Activated CD4-positive, alpha-beta T cell treated with anti-CD3 and anti-CD28 coated beads for 36 hours (primary cell): ENCODE measurements at regions of chr17 and their contacts with region 1.

Region 1: DNA sequence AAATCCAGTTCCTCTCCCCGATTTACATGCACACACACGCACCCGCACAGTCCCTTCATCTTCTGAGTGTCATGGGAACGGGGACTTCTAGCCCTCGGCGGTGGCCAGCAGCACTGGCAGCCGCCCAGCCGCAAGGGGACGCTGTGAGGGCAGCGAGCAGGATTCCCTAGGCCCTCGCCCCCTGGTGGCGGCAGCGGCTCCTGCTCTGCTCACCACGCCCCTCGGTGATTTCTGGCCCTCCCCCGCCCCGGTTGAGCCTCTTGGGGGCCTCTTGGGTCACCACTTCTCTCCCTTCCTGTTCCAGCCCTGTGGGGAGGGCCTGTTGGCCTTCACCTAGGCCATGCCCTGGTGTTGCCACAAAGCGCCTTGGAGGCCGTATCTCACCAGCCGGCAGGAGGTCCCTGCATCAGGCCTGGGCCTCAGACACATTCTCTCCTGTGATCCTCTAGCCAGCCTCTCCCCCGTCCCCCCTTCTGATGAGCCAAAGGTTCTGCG is 75.2 kb upstream of the KSR1 start:
- DNase-seq: peak; percentile 94
- ATAC-seq: peak; percentile 96
- H3K4me3 Mint-ChIP-seq: no peak overlapping the region
- H3K27ac Mint-ChIP-seq: no peak overlapping the region
- H3K4me1 Mint-ChIP-seq: peaks cover 2% of the 10 kb centered on the region
- H3K27me3 Mint-ChIP-seq: peaks cover 23% of the 10 kb centered on the region

Region 2: GRCh38 chr17:27284811-27285415 is 96.1 kb before region 1 on chr17:
- CTCF ChIA-PET with region 1: no interaction called
- POLR2A ChIA-PET with region 1: no interaction called
- intact Hi-C with region 1: no loop called
- DNase-seq: no peak
- ATAC-seq: no peak
- H3K4me3 Mint-ChIP-seq: no peak overlapping the region
- H3K27ac Mint-ChIP-seq: no peak overlapping the region
- H3K4me1 Mint-ChIP-seq: no peaks in the 10 kb centered on the region
- H3K27me3 Mint-ChIP-seq: peaks cover 2% of the 10 kb centered on the region

Region 3: GRCh38 chr17:27296428-27296979 is 84.5 kb before region 1 on chr17:
- CTCF ChIA-PET with region 1: no interaction called
- POLR2A ChIA-PET with region 1: no interaction called
- intact Hi-C with region 1: no loop called
- DNase-seq: no peak
- ATAC-seq: no peak
- H3K4me3 Mint-ChIP-seq: peak overlapping the region; percentile 89
- H3K27ac Mint-ChIP-seq: peak overlapping the region; percentile 99
- H3K4me1 Mint-ChIP-seq: peaks cover 48% of the 10 kb centered on the region
- H3K27me3 Mint-ChIP-seq: no peaks in the 10 kb centered on the region

Region 4: GRCh38 chr17:27368980-27369379 is 12.1 kb before region 1 on chr17:
- CTCF ChIA-PET with region 1: interaction called, 15 read pairs
- POLR2A ChIA-PET with region 1: no interaction called
- intact Hi-C with region 1: no loop called
- DNase-seq: no peak
- ATAC-seq: no peak
- H3K4me3 Mint-ChIP-seq: no peak overlapping the region
- H3K27ac Mint-ChIP-seq: no peak overlapping the region
- H3K4me1 Mint-ChIP-seq: no peaks in the 10 kb centered on the region
- H3K27me3 Mint-ChIP-seq: peaks cover 3% of the 10 kb centered on the region

Region 5: DNA sequence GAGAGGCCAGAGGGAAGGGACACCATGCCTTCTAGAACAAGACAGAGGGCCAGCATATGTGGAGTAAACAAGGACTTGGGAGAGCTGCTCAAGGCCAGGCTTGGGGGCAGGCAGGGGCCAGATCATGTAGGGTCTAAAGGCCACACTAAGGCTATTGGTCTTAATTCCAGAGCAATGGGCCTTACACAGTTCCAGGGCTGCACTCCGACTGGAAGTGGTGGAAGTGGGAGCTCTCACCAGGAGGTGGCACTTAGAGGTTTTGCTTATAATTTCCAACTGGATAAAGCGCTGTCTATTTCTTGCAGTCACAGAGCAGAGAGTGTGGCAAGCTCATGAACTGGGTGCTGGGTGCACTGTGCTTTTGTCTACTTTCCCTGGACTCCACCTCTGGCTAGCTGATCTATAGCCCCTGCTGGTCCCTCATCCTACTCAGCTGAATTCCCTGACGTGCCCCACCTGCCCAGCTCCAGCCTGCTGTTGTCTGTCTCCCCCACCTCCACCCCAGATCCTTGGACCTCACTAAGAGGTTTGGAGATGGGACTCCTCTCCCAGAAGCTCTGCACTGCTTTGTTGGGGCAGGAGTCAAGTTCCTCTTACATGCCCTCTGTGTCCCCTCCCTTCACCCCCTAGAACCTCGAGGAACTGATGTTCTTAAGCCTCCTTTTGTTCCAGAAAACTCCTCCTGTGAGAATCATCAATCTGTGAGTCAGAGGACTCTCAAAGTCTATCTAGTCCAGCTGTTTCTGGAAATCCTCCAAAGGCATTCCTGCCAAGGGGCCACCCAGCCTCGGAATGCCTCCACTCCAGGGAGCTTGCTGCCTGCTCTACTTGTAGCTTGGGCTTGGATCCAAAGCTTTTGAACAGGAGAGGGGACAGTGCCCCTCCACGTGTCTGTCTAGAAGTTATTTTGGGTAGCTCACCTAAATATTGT is 27.1 kb after region 1 on chr17:
- CTCF ChIA-PET with region 1: interaction called, 14 read pairs
- POLR2A ChIA-PET with region 1: no interaction called
- intact Hi-C with region 1: no loop called
- DNase-seq: no peak
- ATAC-seq: no peak
- H3K4me3 Mint-ChIP-seq: no peak overlapping the region
- H3K27ac Mint-ChIP-seq: no peak overlapping the region
- H3K4me1 Mint-ChIP-seq: no peaks in the 10 kb centered on the region
- H3K27me3 Mint-ChIP-seq: peaks cover 2% of the 10 kb centered on the region